ENCODE measurements at regions of chr4 and their contacts with region 1.

Region 1: GRCh38 chr4:51895813-51896408 is 53.0 kb downstream of the DCUN1D4 start:
- DNase-seq: peak in 4 of 5 donors; percentile 22 to 39 (median 30)
- H3K4me3 ChIP-seq: no peak overlapping the region
- H3K4me3 Mint-ChIP-seq: no peak overlapping the region
- H3K27ac ChIP-seq: no peak overlapping the region
- H3K27ac Mint-ChIP-seq: peak overlapping the region in 1 of 7 donors; percentile 5
- H3K4me1 ChIP-seq: no peaks in the 10 kb centered on the region
- H3K4me1 Mint-ChIP-seq: peaks cover 0 to 4% (median 2%) of the 10 kb centered on the region in 4 donors
- H3K27me3 ChIP-seq: no peaks in the 10 kb centered on the region
- H3K27me3 Mint-ChIP-seq: no peaks in the 10 kb centered on the region

Region 2: GRCh38 chr4:51880016-51880915 is 15.6 kb before region 1 on chr4:
- CTCF ChIA-PET with region 1: interaction called, 19 read pairs
- POLR2A ChIA-PET with region 1: no interaction called
- intact Hi-C with region 1: no loop called
- DNase-seq: no peak
- H3K4me3 ChIP-seq: no peak overlapping the region
- H3K4me3 Mint-ChIP-seq: no peak overlapping the region
- H3K27ac ChIP-seq: no peak overlapping the region
- H3K27ac Mint-ChIP-seq: peak overlapping the region in 2 of 7 donors; percentile 22 to 57
- H3K4me1 ChIP-seq: no peaks in the 10 kb centered on the region
- H3K4me1 Mint-ChIP-seq: peaks cover 0 to 3% (median 0%) of the 10 kb centered on the region in 4 donors
- H3K27me3 ChIP-seq: no peaks in the 10 kb centered on the region
- H3K27me3 Mint-ChIP-seq: no peaks in the 10 kb centered on the region

Region 3: GRCh38 chr4:51906167-51906958 is 10.5 kb after region 1 on chr4:
- CTCF ChIA-PET with region 1: interaction called, 13 read pairs
- POLR2A ChIA-PET with region 1: no interaction called
- intact Hi-C with region 1: no loop called
- DNase-seq: no peak
- H3K4me3 ChIP-seq: no peak overlapping the region
- H3K4me3 Mint-ChIP-seq: no peak overlapping the region
- H3K27ac ChIP-seq: no peak overlapping the region
- H3K27ac Mint-ChIP-seq: peak overlapping the region in 2 of 7 donors; percentile 25 to 58
- H3K4me1 ChIP-seq: no peaks in the 10 kb centered on the region
- H3K4me1 Mint-ChIP-seq: peaks cover 0 to 3% (median 2%) of the 10 kb centered on the region in 4 donors
- H3K27me3 ChIP-seq: no peaks in the 10 kb centered on the region
- H3K27me3 Mint-ChIP-seq: no peaks in the 10 kb centered on the region

Region 4: DNA sequence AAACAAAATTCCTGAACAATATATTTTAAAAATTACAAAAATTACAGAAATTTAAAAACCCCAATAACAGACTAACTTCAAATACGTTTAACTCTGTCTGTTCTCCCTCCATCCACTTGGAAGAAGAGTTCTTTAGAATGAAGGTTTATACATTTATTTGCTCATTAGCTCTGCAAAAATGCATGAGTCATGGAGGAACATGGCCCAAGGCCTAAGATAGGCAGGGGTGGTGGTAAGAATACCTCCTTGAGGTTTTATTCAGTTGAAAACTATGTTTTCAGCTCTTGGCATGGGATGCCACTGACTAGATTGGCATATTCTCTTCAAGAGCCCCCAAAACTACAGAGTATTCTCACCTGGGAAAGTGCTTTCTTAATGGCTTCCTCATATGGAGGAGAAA is 133.1 kb after region 1 on chr4:
- CTCF ChIA-PET with region 1: interaction called, 8 read pairs
- POLR2A ChIA-PET with region 1: no interaction called
- intact Hi-C with region 1: loop called (anchors 1 kb)
- DNase-seq: no peak
- H3K4me3 ChIP-seq: no peak overlapping the region
- H3K4me3 Mint-ChIP-seq: no peak overlapping the region
- H3K27ac ChIP-seq: no peak overlapping the region
- H3K27ac Mint-ChIP-seq: no peak overlapping the region
- H3K4me1 ChIP-seq: no peaks in the 10 kb centered on the region
- H3K4me1 Mint-ChIP-seq: peaks cover 0 to 5% (median 0%) of the 10 kb centered on the region in 4 donors
- H3K27me3 ChIP-seq: no peaks in the 10 kb centered on the region
- H3K27me3 Mint-ChIP-seq: no peaks in the 10 kb centered on the region